A549 (cell line): ENCODE measurements at regions of chr9 and their contacts with region 1.

Region 1: DNA sequence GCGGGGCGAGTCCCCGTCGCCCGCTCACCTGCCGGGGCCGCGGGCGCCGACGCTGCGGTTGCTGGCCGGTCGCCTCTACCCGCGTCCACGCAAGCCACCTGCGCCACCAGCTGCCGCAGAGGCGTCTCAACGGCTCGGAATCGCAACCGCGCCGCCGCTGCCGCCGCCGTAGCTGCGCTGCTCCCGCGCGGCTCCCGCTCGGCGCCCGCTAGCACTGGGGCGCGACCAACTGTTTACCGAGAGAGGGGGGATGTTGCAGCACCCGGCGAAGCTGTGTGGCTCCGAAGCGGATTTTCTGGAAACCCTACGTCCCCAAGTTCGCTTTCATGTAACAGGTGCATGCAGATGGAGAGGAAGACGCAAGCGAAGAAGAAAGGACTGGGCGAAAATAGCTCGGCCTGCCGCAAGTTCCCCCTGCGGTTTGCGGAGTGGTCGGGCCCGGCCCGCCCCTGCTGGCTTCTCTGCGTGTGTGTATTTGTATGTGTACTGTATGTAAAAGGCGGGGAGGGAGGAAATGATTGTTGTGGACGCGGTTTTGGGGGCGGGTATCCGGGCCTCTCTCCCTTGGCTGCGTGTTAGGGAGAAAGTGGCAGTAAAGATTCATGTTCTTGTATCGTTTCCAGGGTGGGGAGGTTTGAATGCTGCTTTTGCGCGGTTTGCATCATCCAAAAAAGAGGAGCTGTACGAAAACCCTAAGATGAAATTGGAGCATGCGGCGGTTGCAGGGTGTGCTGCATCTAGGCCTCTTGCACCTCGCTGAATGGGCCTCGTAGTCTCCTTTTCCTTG is at the start of gene PSIP1:
- DNase-seq: peak; percentile 60 to 87
- ATAC-seq: peak; percentile 91 to 94
- H3K4me3 ChIP-seq: peak within 1 kb of the TSS; percentile 99
- H3K27ac ChIP-seq: peak within 1 kb of the TSS; percentile 98 to 99
- H3K4me1 ChIP-seq: peaks cover 22% of the 10 kb centered on the region
- CTCF ChIP-seq: no peak
- EP300 ChIP-seq: no peak
- POLR2A ChIP-seq: peak; percentile 84
- RAD21 ChIP-seq: no peak
- polyA plus RNA-seq, gene PSIP1: 62.5 and 119 TPM in 2 replicates

Region 2: GRCh38 chr9:15576350-15577050 is 65.5 kb after region 1 on chr9:
- CTCF ChIA-PET with region 1: no interaction called
- POLR2A ChIA-PET with region 1: no interaction called
- DNase-seq: no peak
- ATAC-seq: no peak
- H3K4me3 ChIP-seq: no peak overlapping the region
- H3K27ac ChIP-seq: no peak overlapping the region
- H3K4me1 ChIP-seq: no peaks in the 10 kb centered on the region
- CTCF ChIP-seq: no peak
- EP300 ChIP-seq: no peak
- POLR2A ChIP-seq: no peak
- RAD21 ChIP-seq: no peak

Region 3: DNA sequence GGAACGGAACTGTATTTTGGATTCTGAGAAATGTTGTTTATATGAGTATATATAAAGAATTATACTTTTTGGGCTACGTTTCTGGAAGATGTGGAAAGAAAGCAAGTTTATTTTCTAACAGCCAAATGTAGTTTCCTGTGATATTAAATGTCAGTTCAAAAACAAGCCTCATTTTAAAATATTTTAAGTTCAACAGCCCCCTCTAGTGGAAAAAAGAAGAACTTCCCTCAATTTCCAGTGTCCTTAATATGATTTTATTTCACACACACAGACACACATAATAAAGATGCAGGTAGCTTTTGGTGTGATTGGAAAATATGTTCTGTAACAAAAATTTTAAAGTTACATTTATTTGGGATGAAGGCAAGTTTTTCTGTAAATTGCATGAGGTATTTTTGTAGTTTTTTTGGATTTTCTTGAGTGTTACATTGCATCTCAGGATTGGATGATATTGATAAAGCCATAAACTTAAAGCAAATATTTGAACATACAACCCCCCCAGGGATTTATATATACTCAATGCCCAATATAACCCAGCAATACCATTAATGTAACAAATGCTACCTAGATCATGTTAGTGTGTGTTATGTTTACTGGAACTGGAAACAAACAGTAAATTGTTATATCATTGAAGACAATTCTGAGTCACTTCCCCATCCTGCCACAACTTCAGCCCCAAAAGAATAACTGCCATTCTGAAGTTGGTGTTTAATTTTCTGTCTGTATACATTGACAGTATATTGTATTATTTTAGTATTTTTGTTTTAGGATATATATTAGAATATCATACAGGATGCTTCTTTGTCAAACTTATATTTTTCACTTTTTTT is 95.9 kb after region 1 on chr9:
- CTCF ChIA-PET with region 1: interaction called, 11 read pairs
- POLR2A ChIA-PET with region 1: no interaction called
- DNase-seq: peak; percentile 21 to 34
- ATAC-seq: peak in 1 of 2 experiments; percentile 46; a peak in 1 of 6 replicates
- H3K4me3 ChIP-seq: no peak overlapping the region
- H3K27ac ChIP-seq: no peak overlapping the region
- H3K4me1 ChIP-seq: no peaks in the 10 kb centered on the region
- CTCF ChIP-seq: peak; percentile 73
- EP300 ChIP-seq: no peak
- POLR2A ChIP-seq: no peak
- RAD21 ChIP-seq: peak; percentile 70 to 81